PC-3 (cell line): ENCODE measurements at regions of chr6 and their contacts with region 1.

Region 1: GRCh38 chr6:28080631-28081485 is 490 bp downstream of the ZNF165 start:
- DNase-seq: peak; percentile 96
- ATAC-seq: peak; percentile 84
- H3K4me3 ChIP-seq: peak overlapping the region; percentile 89
- H3K27ac ChIP-seq: peak overlapping the region; percentile 85
- H3K4me1 ChIP-seq: peaks cover 3% of the 10 kb centered on the region; the same call in 1 of the 2 replicates
- H3K27me3 ChIP-seq: no peaks in the 10 kb centered on the region
- CTCF ChIP-seq: no peak

Region 2: GRCh38 chr6:27873021-27873940 is 207.6 kb before region 1 on chr6:
- CTCF ChIA-PET with region 1: no interaction called
- POLR2A ChIA-PET with region 1: no interaction called
- intact Hi-C with region 1: no loop called
- DNase-seq: no peak
- ATAC-seq: no peak
- H3K4me3 ChIP-seq: no peak overlapping the region
- H3K27ac ChIP-seq: no peak overlapping the region
- H3K4me1 ChIP-seq: no peaks in the 10 kb centered on the region
- H3K27me3 ChIP-seq: no peaks in the 10 kb centered on the region
- CTCF ChIP-seq: no peak

Region 3: DNA sequence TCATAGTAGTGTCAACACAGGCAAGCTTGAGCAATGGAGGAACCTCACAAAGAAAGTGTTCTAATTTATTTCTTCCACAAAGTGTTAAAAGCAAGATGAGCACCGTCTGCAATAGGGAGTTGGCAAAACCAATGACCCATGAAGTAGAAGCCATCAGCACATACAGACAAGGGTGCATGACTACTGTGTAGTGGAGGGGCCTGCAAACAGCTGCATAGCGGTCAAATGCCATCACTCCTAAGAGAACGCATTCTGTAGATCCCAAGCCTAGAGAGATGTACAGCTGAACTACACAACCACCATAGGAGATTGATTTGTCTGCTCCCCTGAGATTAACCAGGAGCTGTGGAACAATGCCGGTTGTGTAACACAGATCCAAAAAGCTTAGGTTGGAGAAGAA is 27.3 kb before region 1 on chr6:
- CTCF ChIA-PET with region 1: no interaction called
- POLR2A ChIA-PET with region 1: interaction called, 15 read pairs
- intact Hi-C with region 1: no loop called
- DNase-seq: no peak
- ATAC-seq: no peak
- H3K4me3 ChIP-seq: no peak overlapping the region
- H3K27ac ChIP-seq: no peak overlapping the region
- H3K4me1 ChIP-seq: no peaks in the 10 kb centered on the region
- H3K27me3 ChIP-seq: peaks cover 41% of the 10 kb centered on the region
- CTCF ChIP-seq: no peak

Region 4: DNA sequence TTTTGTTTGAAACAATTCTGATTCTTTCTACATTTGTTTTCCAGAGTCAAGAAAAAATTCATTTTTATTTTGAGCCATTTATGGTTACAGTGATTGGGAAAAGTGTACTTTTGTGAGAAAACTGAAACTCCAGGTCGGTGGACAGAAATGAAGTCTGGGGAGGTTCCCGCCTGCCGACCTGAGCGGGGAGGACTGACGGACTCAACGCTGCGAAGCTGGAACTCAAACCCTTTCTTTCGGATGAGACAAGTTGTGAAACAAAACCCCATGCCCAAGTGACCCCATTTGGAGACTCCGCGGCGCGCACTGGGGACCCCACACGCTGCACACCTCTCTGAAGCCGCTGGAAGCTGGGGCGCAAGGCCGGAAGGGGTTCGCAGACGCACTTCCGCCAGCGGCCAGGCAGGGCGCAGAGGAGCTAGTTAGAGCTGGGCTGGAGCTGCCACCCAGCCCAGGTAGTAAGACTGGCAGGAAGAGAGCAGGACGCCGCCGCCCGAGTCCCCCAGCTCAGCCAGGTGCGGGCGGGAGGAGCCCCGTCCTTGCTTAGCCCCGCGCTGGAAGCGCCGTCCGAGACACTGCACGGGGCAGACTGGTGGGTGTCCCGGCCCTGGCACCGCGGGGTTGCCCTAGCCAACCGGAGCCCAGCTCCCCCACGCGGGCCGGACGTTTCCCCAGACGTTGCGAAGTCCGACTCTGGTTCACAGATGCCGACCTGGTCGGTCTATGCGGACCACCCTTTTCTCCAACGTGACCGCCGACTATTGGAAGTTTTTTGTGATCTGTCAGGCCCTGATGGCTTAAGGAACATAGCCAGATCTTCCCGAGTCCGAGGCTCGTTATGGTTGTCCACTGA is 23.8 kb after region 1 on chr6:
- CTCF ChIA-PET with region 1: no interaction called
- POLR2A ChIA-PET with region 1: no interaction called
- intact Hi-C with region 1: loop called (anchors 1 kb)
- DNase-seq: peak; percentile 81
- ATAC-seq: peak; percentile 97
- H3K4me3 ChIP-seq: peak overlapping the region; percentile 77
- H3K27ac ChIP-seq: peak overlapping the region; percentile 4; the same call in 1 of the 2 replicates
- H3K4me1 ChIP-seq: peaks cover 10% of the 10 kb centered on the region; the same call in 1 of the 2 replicates
- H3K27me3 ChIP-seq: no peaks in the 10 kb centered on the region
- CTCF ChIP-seq: peak; percentile 57